ENCODE measurements at regions of chrX and their contacts with region 1.

Region 1: DNA sequence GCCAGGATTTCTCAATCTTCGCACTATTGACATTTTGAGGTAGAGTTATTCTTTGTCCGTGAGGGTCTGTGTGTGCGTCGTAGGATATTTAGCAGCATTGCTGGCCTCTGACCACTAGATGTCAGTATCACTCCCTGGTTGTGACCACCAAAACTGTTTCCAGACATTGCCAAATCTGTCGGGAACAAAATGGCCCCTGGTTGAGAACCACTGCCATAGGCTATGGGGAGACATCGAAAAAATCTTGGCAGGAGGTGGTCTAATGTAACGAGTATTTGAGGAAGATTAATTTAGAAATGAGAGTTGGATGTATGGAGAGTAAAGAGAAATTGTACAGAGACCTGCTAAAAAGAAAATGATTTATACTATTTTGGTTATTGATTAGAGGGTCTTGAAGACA is 108.4 kb downstream of the DOCK11 start:
- DNase-seq: peak; percentile 73
- H3K4me3 Mint-ChIP-seq: peak overlapping the region; percentile 8
- H3K27ac Mint-ChIP-seq: no peak overlapping the region
- H3K4me1 Mint-ChIP-seq: peaks cover 5% of the 10 kb centered on the region
- H3K27me3 Mint-ChIP-seq: no peaks in the 10 kb centered on the region
- CTCF ChIP-seq: peak; percentile 61

Region 2: DNA sequence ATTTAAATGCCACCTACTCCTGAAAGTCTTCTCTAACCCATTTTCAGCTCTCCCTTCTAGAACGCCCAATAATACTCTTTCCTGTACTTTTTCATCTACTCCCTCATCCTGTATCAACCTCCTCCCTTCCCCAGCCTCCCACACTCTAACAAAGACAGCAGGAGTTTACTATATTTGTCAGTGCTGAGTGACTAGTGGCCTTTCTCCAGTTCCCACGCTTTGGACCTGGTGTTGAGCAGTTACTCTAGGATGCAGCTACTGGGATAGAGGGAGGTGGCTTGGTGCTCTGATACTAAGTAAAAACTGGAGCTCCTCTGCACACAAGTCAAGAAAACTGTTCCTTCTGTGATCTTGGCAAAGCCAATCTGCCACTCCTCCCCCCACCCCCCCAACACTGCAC is 451.3 kb before region 1 on chrX:
- CTCF ChIA-PET with region 1: no interaction called
- POLR2A ChIA-PET with region 1: no interaction called
- intact Hi-C with region 1: no loop called
- DNase-seq: no peak
- H3K4me3 Mint-ChIP-seq: no peak overlapping the region
- H3K27ac Mint-ChIP-seq: no peak overlapping the region
- H3K4me1 Mint-ChIP-seq: no peaks in the 10 kb centered on the region
- H3K27me3 Mint-ChIP-seq: peaks cover 43% of the 10 kb centered on the region
- CTCF ChIP-seq: no peak

Region 3: GRCh38 chrX:118325453-118325852 is 278.5 kb before region 1 on chrX:
- CTCF ChIA-PET with region 1: interaction called, 32 read pairs
- POLR2A ChIA-PET with region 1: no interaction called
- intact Hi-C with region 1: loop called (anchors 1 kb)
- DNase-seq: peak; percentile 4
- H3K4me3 Mint-ChIP-seq: no peak overlapping the region
- H3K27ac Mint-ChIP-seq: no peak overlapping the region
- H3K4me1 Mint-ChIP-seq: no peaks in the 10 kb centered on the region
- H3K27me3 Mint-ChIP-seq: peaks cover 40% of the 10 kb centered on the region
- CTCF ChIP-seq: peak; percentile 20

Region 4: DNA sequence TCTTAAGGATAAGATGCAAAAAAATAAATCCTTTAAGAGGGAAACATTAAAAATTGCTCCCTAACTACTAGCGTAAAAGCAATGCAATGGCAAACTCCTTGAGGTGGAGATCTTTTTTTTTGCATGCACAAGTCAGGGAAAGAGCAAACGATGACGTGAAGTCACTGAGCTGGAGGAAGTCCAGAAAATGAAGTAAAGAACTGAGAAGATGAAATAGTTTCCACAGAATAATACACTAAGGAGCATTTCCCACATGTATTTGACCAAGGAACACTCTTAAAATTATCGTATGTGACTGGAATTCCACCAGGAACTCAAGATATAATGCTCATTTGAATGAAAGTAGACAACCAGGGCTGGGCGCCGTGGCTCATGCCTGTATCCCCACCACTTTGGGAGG is 129.4 kb before region 1 on chrX:
- CTCF ChIA-PET with region 1: interaction called, 10 read pairs
- POLR2A ChIA-PET with region 1: no interaction called
- intact Hi-C with region 1: no loop called
- DNase-seq: no peak
- H3K4me3 Mint-ChIP-seq: no peak overlapping the region
- H3K27ac Mint-ChIP-seq: no peak overlapping the region
- H3K4me1 Mint-ChIP-seq: no peaks in the 10 kb centered on the region
- H3K27me3 Mint-ChIP-seq: no peaks in the 10 kb centered on the region
- CTCF ChIP-seq: no peak

Region 5: GRCh38 chrX:118520216-118521206 is 83.5 kb before region 1 on chrX:
- CTCF ChIA-PET with region 1: interaction called, 10 read pairs
- POLR2A ChIA-PET with region 1: no interaction called
- intact Hi-C with region 1: no loop called
- DNase-seq: peak; percentile 73
- H3K4me3 Mint-ChIP-seq: no peak overlapping the region
- H3K27ac Mint-ChIP-seq: peak overlapping the region; percentile 66
- H3K4me1 Mint-ChIP-seq: peaks cover 15% of the 10 kb centered on the region
- H3K27me3 Mint-ChIP-seq: no peaks in the 10 kb centered on the region
- CTCF ChIP-seq: no peak

Region 6: GRCh38 chrX:118588715-118589114 is 15.3 kb before region 1 on chrX:
- CTCF ChIA-PET with region 1: interaction called, 17 read pairs
- POLR2A ChIA-PET with region 1: no interaction called
- intact Hi-C with region 1: no loop called
- DNase-seq: no peak
- H3K4me3 Mint-ChIP-seq: no peak overlapping the region
- H3K27ac Mint-ChIP-seq: no peak overlapping the region
- H3K4me1 Mint-ChIP-seq: no peaks in the 10 kb centered on the region
- H3K27me3 Mint-ChIP-seq: peaks cover 22% of the 10 kb centered on the region
- CTCF ChIP-seq: no peak

Region 7: DNA sequence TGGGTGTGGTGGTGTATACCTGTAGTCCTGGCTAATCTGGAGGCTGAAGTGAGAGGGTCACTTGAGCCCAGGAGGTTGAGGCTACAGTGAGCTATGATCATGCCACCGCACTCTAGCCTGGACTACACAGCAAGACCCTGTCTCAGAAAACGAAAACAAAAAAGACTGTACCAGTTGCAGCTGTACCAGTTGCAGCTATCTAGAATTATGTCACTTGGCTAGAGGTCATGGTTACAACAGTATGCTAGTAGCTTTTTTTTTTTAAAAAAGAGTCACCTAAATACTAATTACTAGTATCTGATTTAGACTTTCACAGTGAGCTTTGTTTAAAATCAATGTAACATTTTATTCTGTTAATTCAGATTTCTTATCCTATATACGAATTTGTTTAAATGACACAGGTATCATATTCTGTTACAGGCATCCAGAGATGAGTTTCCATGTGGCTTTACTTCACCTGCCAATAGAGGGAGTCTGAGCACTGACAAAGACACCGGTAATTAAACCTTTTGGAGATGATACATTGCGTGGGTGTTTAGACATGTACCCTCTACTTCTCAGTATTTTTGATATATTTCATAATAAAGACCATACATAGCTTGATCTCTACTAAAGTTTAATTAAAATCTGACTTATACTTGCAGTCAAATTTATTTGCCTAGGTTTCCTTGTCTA is 23.2 kb after region 1 on chrX:
- CTCF ChIA-PET with region 1: interaction called, 34 read pairs
- POLR2A ChIA-PET with region 1: no interaction called
- intact Hi-C with region 1: no loop called
- DNase-seq: peak; percentile 51
- H3K4me3 Mint-ChIP-seq: no peak overlapping the region
- H3K27ac Mint-ChIP-seq: no peak overlapping the region
- H3K4me1 Mint-ChIP-seq: no peaks in the 10 kb centered on the region
- H3K27me3 Mint-ChIP-seq: no peaks in the 10 kb centered on the region
- CTCF ChIP-seq: peak; percentile 46

Region 8: GRCh38 chrX:118807151-118808017 is 203.4 kb after region 1 on chrX:
- CTCF ChIA-PET with region 1: interaction called, 14 read pairs
- POLR2A ChIA-PET with region 1: no interaction called
- intact Hi-C with region 1: loop called (anchors 1 kb)
- DNase-seq: peak; percentile 63
- H3K4me3 Mint-ChIP-seq: no peak overlapping the region
- H3K27ac Mint-ChIP-seq: no peak overlapping the region
- H3K4me1 Mint-ChIP-seq: no peaks in the 10 kb centered on the region
- H3K27me3 Mint-ChIP-seq: peaks cover 48% of the 10 kb centered on the region
- CTCF ChIP-seq: peak; percentile 76

Measured in MCF 10A (cell line).